ENCODE measurements at regions of chr2 and their contacts with region 1.

Region 1: GRCh38 chr2:231900486-231900942 is 25.7 kb downstream of the NPPC start:
- DNase-seq: peak; percentile 76
- H3K4me3 ChIP-seq: no peak overlapping the region
- H3K27ac ChIP-seq: no peak overlapping the region
- H3K4me1 ChIP-seq: no peaks in the 10 kb centered on the region
- H3K27me3 ChIP-seq: peaks cover 27% of the 10 kb centered on the region
- CTCF ChIP-seq: peak; percentile 81

Region 2: GRCh38 chr2:231917280-231918066 is 17.0 kb after region 1 on chr2:
- intact Hi-C with region 1: no loop called
- DNase-seq: peak; percentile 46
- H3K4me3 ChIP-seq: no peak overlapping the region
- H3K27ac ChIP-seq: no peak overlapping the region
- H3K4me1 ChIP-seq: peaks cover 7% of the 10 kb centered on the region
- H3K27me3 ChIP-seq: peaks cover 83% of the 10 kb centered on the region
- CTCF ChIP-seq: no peak

Region 3: DNA sequence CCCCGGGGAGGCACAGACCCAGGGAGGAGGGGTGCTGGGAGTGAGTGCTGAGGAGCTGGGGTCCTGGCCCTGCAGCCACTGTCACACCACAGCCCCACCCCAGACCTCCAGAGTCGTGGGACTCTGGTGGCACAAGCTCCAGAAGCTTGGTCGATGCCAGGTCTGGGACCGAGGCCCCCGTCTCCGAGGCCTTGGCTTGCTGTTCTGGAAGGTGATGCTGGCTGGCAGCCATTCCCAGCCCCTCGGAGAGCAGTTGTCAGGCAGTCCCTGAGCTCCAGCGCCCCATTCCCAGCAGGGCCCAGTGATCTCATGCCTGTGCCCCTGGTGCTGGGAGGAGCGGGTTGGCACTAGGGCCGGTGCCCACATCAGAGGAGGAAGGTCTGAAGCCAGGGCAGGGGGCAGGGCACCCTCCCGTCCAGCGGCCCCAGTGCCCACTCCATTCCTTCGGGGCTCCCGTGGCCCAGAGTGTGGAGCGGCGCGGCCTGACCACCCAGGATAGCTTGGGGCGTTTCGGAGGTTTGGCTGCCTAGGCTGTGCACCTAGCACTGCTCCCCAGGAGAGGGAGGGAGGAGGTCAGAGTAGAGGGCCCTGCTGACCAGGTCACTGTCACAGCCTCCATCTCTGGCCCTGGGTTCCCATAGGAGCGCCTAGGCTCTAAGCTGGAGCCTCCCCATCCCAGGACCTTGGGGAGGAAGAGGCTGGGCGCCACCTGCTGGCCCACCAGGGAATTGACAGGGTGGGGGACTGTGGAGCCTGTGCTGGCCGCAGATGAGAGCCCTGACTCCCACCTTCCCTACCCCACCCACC is 538.6 kb after region 1 on chr2:
- intact Hi-C with region 1: loop called (anchors 10 kb)
- DNase-seq: no peak
- H3K4me3 ChIP-seq: no peak overlapping the region
- H3K27ac ChIP-seq: no peak overlapping the region
- H3K4me1 ChIP-seq: peaks cover 3% of the 10 kb centered on the region
- H3K27me3 ChIP-seq: peaks cover 6% of the 10 kb centered on the region
- CTCF ChIP-seq: peak; percentile 67

Region 4: GRCh38 chr2:233152541-233152940 is 1252.0 kb after region 1 on chr2:
- intact Hi-C with region 1: no loop called
- DNase-seq: peak; percentile 83
- H3K4me3 ChIP-seq: no peak overlapping the region
- H3K27ac ChIP-seq: peak overlapping the region; percentile 1
- H3K4me1 ChIP-seq: peaks cover 5% of the 10 kb centered on the region
- H3K27me3 ChIP-seq: no peaks in the 10 kb centered on the region
- CTCF ChIP-seq: no peak

Measured in left ventricle myocardium inferior (tissue), 1 donor.